ENCODE measurements at regions of chr12 and their contacts with region 1.

Region 1: GRCh38 chr12:7018350-7019042 is at the start of gene LPCAT3:
- H3K4me3 Mint-ChIP-seq: peak within 1 kb of the TSS; percentile 99
- H3K27ac Mint-ChIP-seq: peak within 1 kb of the TSS; percentile 80
- H3K4me1 Mint-ChIP-seq: peaks cover 49% of the 10 kb centered on the region
- H3K27me3 Mint-ChIP-seq: no peaks in the 10 kb centered on the region

Region 2: GRCh38 chr12:7005311-7005710 is 13.2 kb before region 1 on chr12:
- intact Hi-C with region 1: loop called (anchors 2 kb)
- H3K4me3 Mint-ChIP-seq: peak overlapping the region; percentile 44
- H3K27ac Mint-ChIP-seq: peak overlapping the region; percentile 90
- H3K4me1 Mint-ChIP-seq: peaks cover 67% of the 10 kb centered on the region
- H3K27me3 Mint-ChIP-seq: no peaks in the 10 kb centered on the region

Measured in dendritic cell treated with granulocyte-macrophage colony-stimulating factor and Interleukin-4, amounts not matched to agents 40 ng/mL and 50 ng/mL, for 4 days (primary cell).